ENCODE measurements at regions of chr12 and their contacts with region 1.

Region 1: DNA sequence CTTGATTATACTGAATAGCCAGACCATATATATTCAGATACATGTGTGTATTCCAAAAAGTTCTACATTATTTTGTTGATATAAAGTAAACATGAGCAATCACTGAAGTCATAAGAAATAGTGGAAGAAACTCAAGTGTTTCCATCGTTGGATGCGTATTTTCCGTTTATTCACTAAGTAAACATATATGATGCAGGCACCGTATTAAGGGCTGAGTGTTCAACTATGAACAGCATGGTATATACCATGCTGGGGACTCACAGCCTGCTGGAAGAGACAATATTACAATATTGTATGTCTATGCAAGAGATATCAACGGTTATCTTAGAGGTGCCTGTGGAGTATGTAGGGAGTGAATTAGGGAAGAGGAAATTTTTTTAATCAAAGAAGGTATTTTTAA is 1.2 kb downstream of the PYROXD1 start:
- DNase-seq: no peak
- ATAC-seq: no peak
- H3K4me3 ChIP-seq: peak overlapping the region; percentile 53 to 72
- H3K27ac ChIP-seq: peak overlapping the region; percentile 92; the same call in 1 of the 2 replicates
- H3K4me1 ChIP-seq: peaks cover 0 to 15% of the 10 kb centered on the region in 2 experiments; a peak in 3 of 4 replicates
- H3K27me3 ChIP-seq: no peaks in the 10 kb centered on the region
- CTCF ChIP-seq: no peak
- POLR2A ChIP-seq: no peak
- RAD21 ChIP-seq: no peak

Region 2: DNA sequence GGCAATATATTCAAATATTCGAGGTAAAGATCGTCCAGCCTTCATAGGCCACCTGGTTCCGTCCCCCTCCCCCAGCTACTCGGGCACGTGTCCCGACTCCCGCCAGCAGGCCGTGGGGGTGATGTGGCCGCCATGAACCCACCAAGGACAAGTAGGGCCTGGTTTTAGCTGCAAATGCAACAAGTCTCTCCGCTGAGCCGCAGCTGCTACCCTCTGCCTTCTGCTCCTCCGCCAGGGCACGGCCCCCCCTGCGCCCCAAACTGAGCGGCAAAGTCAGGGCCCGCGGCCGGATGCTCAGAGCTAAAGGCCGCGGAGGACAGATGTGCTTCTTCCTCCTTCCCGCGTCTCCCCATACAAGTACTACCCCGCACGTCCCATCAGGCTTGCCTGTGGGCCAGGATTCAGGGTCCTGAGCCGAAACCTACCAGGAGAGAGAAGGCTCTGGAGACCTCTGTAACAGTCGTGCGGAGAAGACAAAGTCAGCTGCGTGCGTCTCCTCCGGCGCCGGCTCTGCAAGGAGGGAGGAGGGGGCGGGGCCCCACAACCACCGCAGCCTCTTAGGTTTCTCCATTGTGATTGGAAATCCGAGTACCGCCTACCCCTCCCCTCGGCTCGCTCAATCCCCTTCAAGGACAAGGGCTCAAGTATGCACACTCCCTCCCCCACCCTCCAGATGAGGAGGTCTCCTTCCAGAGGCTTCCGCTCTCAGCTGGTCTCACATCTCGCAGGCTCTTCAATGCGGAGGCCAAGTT is 218.9 kb after region 1 on chr12 and contains the start of gene LDHB:
- CTCF ChIA-PET with region 1: no interaction called
- POLR2A ChIA-PET with region 1: no interaction called
- RAD21 ChIA-PET with region 1: no interaction called
- intact Hi-C with region 1: loop called (anchors 10 kb)
- DNase-seq: peak; percentile 95
- ATAC-seq: peak; percentile 96
- H3K4me3 ChIP-seq: peak within 1 kb of the TSS; percentile 64 to 93
- H3K27ac ChIP-seq: peak within 1 kb of the TSS; percentile 88
- H3K4me1 ChIP-seq: peaks cover 0 to 17% of the 10 kb centered on the region in 2 experiments; a peak in 2 of 4 replicates
- H3K27me3 ChIP-seq: no peaks in the 10 kb centered on the region
- CTCF ChIP-seq: no peak
- POLR2A ChIP-seq: peak; percentile 91
- RAD21 ChIP-seq: no peak
- total RNA-seq, gene LDHB: 1,454 TPM

Measured in HCT116 (cell line).